Dorsolateral prefrontal cortex (tissue), 120 donors: ENCODE measurements at regions of chr6 and their contacts with region 1.

Region 1: GRCh38 chr6:163249651-163250101 is 164.8 kb upstream of the QKI start:
- DNase-seq: peak in 4 of 10 donors; percentile 34 to 70 (median 56)
- H3K4me3 ChIP-seq: no peak overlapping the region
- H3K27ac ChIP-seq: peak overlapping the region; percentile 77 to 100 (median 98)
- H3K27me3 ChIP-seq: no peaks in the 10 kb centered on the region
- CTCF ChIP-seq: no peak

Region 2: GRCh38 chr6:163186527-163186926 is 63.1 kb before region 1 on chr6:
- intact Hi-C with region 1: loop called (anchors 2 to 5 kb)
- DNase-seq: no peak
- H3K4me3 ChIP-seq: no peak overlapping the region
- H3K27ac ChIP-seq: peak overlapping the region in 58 of 59 donors; percentile 72 to 100 (median 97)
- H3K27me3 ChIP-seq: no peaks in the 10 kb centered on the region
- CTCF ChIP-seq: no peak

Region 3: DNA sequence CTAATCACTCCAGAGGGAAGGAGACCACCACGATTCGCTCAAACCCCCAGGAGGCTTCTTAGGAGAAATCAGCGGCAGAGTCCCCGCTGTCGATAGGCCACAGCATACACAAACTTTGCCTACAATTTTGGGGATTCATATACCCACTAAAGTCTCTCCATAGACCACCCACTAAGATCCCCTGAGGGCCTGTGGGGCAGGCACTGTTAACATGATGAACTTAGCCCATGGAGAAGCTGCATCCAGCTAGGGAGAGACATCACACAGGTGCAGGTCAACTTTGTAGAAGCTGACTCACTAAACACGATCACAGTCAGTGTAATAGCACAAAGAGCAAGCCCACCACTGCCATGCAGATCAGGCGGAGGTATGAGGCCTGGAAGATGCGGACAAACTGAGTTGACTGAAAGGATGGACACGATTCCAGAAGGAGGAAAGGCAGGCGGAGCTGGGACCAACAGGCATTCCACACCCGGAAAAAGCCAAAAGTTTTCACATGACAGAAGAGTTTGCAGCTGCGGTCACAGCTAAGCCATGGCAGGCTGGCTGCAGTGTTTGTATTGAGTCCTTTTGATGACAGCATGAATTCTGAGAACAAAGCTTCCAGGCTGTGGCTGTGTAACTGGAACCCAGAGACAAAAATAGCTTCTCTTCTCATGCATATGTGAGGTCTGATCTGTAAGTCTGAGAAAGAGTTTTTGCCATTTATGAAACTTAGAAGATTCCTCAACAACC is 89.2 kb after region 1 on chr6:
- intact Hi-C with region 1: loop called in 1 of 2 experiments (anchors 5 kb)
- DNase-seq: peak in 8 of 10 donors; percentile 74 to 91 (median 84)
- H3K4me3 ChIP-seq: peak overlapping the region in 15 of 59 donors; percentile 0 to 37 (median 9)
- H3K27ac ChIP-seq: peak overlapping the region; percentile 72 to 100 (median 97)
- H3K27me3 ChIP-seq: no peaks in the 10 kb centered on the region
- CTCF ChIP-seq: peak in 5 of 56 donors; percentile 11 to 35 (median 20)

Region 4: GRCh38 chr6:163347021-163347446 is 97.4 kb after region 1 on chr6:
- intact Hi-C with region 1: loop called (anchors 2 to 5 kb)
- DNase-seq: no peak
- H3K4me3 ChIP-seq: peak overlapping the region in 13 of 59 donors; percentile 11 to 51 (median 37)
- H3K27ac ChIP-seq: peak overlapping the region; percentile 89 to 100 (median 97)
- H3K27me3 ChIP-seq: no peaks in the 10 kb centered on the region
- CTCF ChIP-seq: no peak